A549 (cell line): ENCODE measurements at regions of chr12 and their contacts with region 1.

Region 1: DNA sequence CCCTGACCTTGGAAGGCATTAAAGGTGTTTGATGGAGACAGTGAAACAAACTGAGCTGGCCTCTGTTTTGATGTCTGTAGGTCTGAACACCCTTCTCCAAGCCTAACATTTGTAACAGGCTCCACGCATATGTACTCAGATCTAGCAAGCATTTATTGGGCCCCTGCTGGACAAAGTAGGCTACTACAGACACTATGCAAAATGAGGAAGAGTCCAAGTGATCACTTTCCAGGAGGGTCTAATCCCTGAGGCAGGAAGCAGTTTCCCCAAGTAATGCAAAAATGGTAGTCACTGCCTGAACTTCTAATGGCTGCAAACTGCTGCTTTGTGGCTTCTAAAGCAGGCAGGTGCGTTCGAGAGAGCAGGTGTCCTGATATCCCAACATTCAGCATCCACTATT is 405.8 kb downstream of the MED13L start:
- DNase-seq: peak; percentile 66 to 69
- ATAC-seq: peak; percentile 85 to 94
- H3K4me3 ChIP-seq: no peak overlapping the region
- H3K27ac ChIP-seq: peak overlapping the region in 1 of 2 experiments; percentile 22; a peak in 3 of 6 replicates
- H3K4me1 ChIP-seq: peaks cover 36% of the 10 kb centered on the region
- CTCF ChIP-seq: peak; percentile 43
- EP300 ChIP-seq: no peak
- POLR2A ChIP-seq: no peak
- RAD21 ChIP-seq: peak in 1 of 2 experiments; percentile 25; a peak in 1 of 5 replicates

Region 2: DNA sequence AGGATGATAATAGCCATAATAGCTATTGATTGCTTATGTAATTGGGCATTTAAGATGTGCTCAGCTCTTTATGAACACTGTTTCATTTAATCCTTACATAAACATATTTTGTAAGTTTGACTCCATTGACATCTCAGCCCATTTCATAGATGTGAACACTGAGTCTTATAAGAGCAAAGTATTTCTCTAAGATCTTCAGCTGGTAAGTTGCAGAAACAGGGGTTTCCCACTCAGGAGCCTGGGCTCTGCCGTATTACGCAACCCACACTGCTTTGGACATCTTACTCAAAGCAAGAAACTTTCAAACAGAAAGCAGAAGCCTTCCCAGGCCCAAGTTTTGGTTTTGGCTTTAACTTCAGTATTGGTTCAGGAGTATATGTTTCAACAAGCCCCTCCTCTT is 299.3 kb before region 1 on chr12:
- CTCF ChIA-PET with region 1: no interaction called
- POLR2A ChIA-PET with region 1: no interaction called
- DNase-seq: no peak
- ATAC-seq: no peak
- H3K4me3 ChIP-seq: no peak overlapping the region
- H3K27ac ChIP-seq: no peak overlapping the region
- H3K4me1 ChIP-seq: peaks cover 9% of the 10 kb centered on the region
- CTCF ChIP-seq: no peak
- EP300 ChIP-seq: no peak
- POLR2A ChIP-seq: no peak
- RAD21 ChIP-seq: no peak

Region 3: GRCh38 chr12:115830618-115831017 is 41.1 kb before region 1 on chr12:
- CTCF ChIA-PET with region 1: interaction called, 10 read pairs
- POLR2A ChIA-PET with region 1: no interaction called
- DNase-seq: no peak
- ATAC-seq: no peak
- H3K4me3 ChIP-seq: no peak overlapping the region
- H3K27ac ChIP-seq: peak overlapping the region in 1 of 2 experiments; percentile 92; a peak in 1 of 6 replicates
- H3K4me1 ChIP-seq: peaks cover 34% of the 10 kb centered on the region; the same call in 2 of the 3 replicates
- CTCF ChIP-seq: no peak
- EP300 ChIP-seq: no peak
- POLR2A ChIP-seq: no peak
- RAD21 ChIP-seq: no peak

Region 4: DNA sequence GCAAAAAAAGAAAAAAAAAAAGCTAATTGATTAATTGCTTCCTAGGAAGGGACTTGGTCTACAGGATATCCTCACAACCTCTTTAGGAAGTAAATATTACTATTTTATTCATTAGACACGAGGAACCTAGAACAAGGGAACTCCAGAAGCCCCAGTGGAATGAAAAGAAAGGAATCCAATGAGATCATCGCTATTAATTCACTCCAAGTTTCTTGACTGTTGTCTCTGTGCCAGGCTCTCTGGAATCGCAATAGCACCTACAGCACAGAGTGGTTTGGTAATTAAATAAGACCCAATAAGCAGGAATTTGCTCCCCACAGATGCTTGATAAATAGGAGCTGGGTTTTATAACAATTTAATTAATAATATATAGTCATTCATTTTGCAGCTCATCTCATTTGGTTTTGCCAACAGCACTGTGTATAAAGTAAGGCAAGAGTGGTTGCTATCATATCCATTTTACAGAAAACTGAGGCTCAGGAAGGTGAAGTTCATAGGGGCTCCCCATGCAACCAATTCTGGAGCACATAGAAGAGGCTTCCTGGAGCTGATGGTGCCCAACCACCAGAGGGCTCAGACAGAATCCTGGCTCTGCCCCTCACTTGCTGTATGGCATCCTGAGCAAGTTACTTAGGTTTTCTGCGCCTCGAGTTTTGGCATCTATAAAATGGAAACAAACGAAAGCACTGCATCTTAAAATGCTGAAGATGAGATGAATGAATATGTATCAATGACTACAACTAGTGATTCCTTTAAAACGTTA is 14.4 kb before region 1 on chr12:
- CTCF ChIA-PET with region 1: interaction called, 67 read pairs
- POLR2A ChIA-PET with region 1: no interaction called
- DNase-seq: no peak
- ATAC-seq: peak; percentile 77 to 85; a peak in 4 of 6 replicates
- H3K4me3 ChIP-seq: no peak overlapping the region
- H3K27ac ChIP-seq: peak overlapping the region in 1 of 2 experiments; percentile 53; a peak in 1 of 6 replicates
- H3K4me1 ChIP-seq: no peaks in the 10 kb centered on the region
- CTCF ChIP-seq: no peak
- EP300 ChIP-seq: no peak
- POLR2A ChIP-seq: no peak
- RAD21 ChIP-seq: no peak; a peak in 1 of 5 replicates

Region 5: GRCh38 chr12:115885038-115885690 is 13.4 kb after region 1 on chr12:
- CTCF ChIA-PET with region 1: interaction called, 39 read pairs
- POLR2A ChIA-PET with region 1: no interaction called
- DNase-seq: no peak
- ATAC-seq: no peak
- H3K4me3 ChIP-seq: no peak overlapping the region
- H3K27ac ChIP-seq: no peak overlapping the region
- H3K4me1 ChIP-seq: no peaks in the 10 kb centered on the region
- CTCF ChIP-seq: no peak
- EP300 ChIP-seq: no peak
- POLR2A ChIP-seq: no peak
- RAD21 ChIP-seq: no peak